ENCODE measurements at regions of chr16 and their contacts with region 1.

Region 1: GRCh38 chr16:56191156-56191815 is at the start of gene GNAO1:
- H3K4me3 Mint-ChIP-seq: peak within 1 kb of the TSS; percentile 76
- H3K27ac Mint-ChIP-seq: no peak within 1 kb of the TSS
- H3K4me1 Mint-ChIP-seq: peaks cover 30% of the 10 kb centered on the region
- H3K27me3 Mint-ChIP-seq: peaks cover 83% of the 10 kb centered on the region

Region 2: DNA sequence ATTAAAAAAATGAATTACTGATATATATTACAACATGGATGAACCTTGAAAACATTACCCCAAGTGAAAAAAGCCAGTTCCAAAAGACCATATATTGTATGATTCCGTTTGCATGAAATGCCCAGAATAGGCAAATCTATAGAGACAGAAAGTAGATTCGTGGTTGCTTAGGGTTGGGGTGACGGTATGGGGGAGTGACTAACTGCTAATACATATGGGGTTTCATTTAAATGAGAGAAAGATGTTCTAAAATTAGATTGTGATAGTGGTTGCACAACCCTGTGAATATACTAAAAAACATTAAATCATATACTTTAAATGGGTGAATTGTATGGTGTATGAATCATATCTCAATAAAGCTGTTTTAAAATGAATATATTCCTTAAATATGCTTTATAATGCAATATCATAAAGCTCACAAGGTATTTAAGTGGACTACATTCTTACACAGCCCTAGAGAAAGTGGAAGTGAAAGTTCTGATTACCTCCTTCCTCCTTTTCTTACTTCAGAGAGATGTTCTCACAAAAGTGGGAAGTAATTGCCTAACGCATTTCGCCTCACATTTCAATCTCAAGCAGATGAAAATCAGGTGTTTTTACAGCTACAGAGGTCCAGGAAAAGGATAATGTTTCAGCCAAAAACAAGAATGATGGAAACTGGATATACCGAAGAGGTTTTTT is 142.7 kb before region 1 on chr16:
- intact Hi-C with region 1: loop called (anchors 5 kb)
- H3K4me3 Mint-ChIP-seq: no peak overlapping the region
- H3K27ac Mint-ChIP-seq: no peak overlapping the region
- H3K4me1 Mint-ChIP-seq: peaks cover 20% of the 10 kb centered on the region
- H3K27me3 Mint-ChIP-seq: peaks cover 46% of the 10 kb centered on the region

Measured in dendritic cell treated with granulocyte-macrophage colony-stimulating factor and Interleukin-4, amounts not matched to agents 40 ng/mL and 50 ng/mL, for 4 days (primary cell).